ENCODE measurements at regions of chr9 and their contacts with region 1.

Region 1: GRCh38 chr9:121640076-121640475 is 11.4 kb upstream of the DAB2IP start:
- DNase-seq: peak; percentile 50
- ATAC-seq: peak; percentile 96
- H3K4me3 ChIP-seq: peak overlapping the region in 1 of 3 experiments; percentile 44; a peak in 1 of 6 replicates
- H3K27ac ChIP-seq: no peak overlapping the region
- H3K4me1 ChIP-seq: peaks cover 33% of the 10 kb centered on the region
- H3K27me3 ChIP-seq: no peaks in the 10 kb centered on the region
- CTCF ChIP-seq: peak; percentile 94
- EP300 ChIP-seq: no peak
- POLR2A ChIP-seq: no peak
- RAD21 ChIP-seq: peak; percentile 78; the same call in 1 of the 2 replicates

Region 2: GRCh38 chr9:121650217-121651007 is 10.3 kb after region 1 on chr9:
- CTCF ChIA-PET with region 1: no interaction called
- POLR2A ChIA-PET with region 1: interaction called, 13 read pairs
- in situ Hi-C with region 1: no loop called
- intact Hi-C with region 1: no loop called
- DNase-seq: peak; percentile 42
- ATAC-seq: peak; percentile 33
- H3K4me3 ChIP-seq: peak overlapping the region; percentile 65 to 77 (median 67); a peak in 5 of 6 replicates
- H3K27ac ChIP-seq: no peak overlapping the region
- H3K4me1 ChIP-seq: peaks cover 59% of the 10 kb centered on the region
- H3K27me3 ChIP-seq: peaks cover 0 to 11% of the 10 kb centered on the region in 2 experiments; a peak in 2 of 5 replicates
- CTCF ChIP-seq: no peak
- EP300 ChIP-seq: no peak
- POLR2A ChIP-seq: no peak
- RAD21 ChIP-seq: no peak

Region 3: DNA sequence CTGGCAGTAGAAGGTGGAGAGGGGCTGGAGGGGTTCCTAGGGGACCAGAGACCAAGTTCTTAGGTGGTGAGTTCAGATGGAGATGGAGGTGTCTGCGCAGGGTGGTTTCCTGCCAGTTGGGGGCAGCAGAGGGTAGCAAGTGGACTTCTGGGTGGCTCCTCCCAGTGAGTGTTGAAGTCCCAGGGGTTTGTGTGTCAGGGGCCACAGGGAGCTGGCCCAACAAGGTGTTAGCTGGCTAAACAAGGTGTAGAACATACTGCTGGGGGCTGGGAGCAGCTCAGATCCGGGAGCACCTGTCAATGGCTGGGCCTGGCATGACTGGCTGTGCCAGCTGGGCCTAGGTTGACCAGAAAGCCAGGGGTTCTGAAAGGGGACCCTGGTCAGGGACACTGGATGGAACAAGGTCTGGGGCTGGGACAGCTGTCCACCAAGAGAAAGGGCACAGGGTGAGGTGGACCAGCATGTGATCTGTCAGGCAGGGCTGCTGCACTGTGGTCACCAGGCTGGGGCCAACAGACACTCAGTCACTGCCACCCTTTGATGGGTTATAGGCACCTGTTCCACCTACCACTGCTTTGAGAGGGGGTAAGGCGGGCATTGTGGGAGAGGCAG is 47.0 kb after region 1 on chr9:
- CTCF ChIA-PET with region 1: interaction called, 11 read pairs
- POLR2A ChIA-PET with region 1: no interaction called
- in situ Hi-C with region 1: loop called (anchors 5 kb)
- intact Hi-C with region 1: loop called (anchors 1 kb)
- DNase-seq: peak; percentile 63
- ATAC-seq: peak; percentile 87
- H3K4me3 ChIP-seq: no peak overlapping the region
- H3K27ac ChIP-seq: no peak overlapping the region
- H3K4me1 ChIP-seq: peaks cover 36% of the 10 kb centered on the region
- H3K27me3 ChIP-seq: no peaks in the 10 kb centered on the region
- CTCF ChIP-seq: peak; percentile 96
- EP300 ChIP-seq: no peak
- POLR2A ChIP-seq: no peak
- RAD21 ChIP-seq: peak; percentile 75

Region 4: GRCh38 chr9:121698627-121699570 is 58.8 kb after region 1 on chr9:
- CTCF ChIA-PET with region 1: no interaction called
- POLR2A ChIA-PET with region 1: no interaction called
- in situ Hi-C with region 1: no loop called
- intact Hi-C with region 1: loop called (anchors 1 kb)
- DNase-seq: no peak
- ATAC-seq: no peak
- H3K4me3 ChIP-seq: no peak overlapping the region
- H3K27ac ChIP-seq: no peak overlapping the region
- H3K4me1 ChIP-seq: no peaks in the 10 kb centered on the region
- H3K27me3 ChIP-seq: no peaks in the 10 kb centered on the region
- CTCF ChIP-seq: no peak
- EP300 ChIP-seq: no peak
- POLR2A ChIP-seq: no peak
- RAD21 ChIP-seq: no peak

Region 5: GRCh38 chr9:121992571-121993212 is 352.6 kb after region 1 on chr9:
- CTCF ChIA-PET with region 1: interaction called, 4 read pairs
- POLR2A ChIA-PET with region 1: no interaction called
- in situ Hi-C with region 1: loop called (anchors 10 kb)
- intact Hi-C with region 1: loop called (anchors 1 kb)
- DNase-seq: peak; percentile 65
- ATAC-seq: peak; percentile 53
- H3K4me3 ChIP-seq: no peak overlapping the region
- H3K27ac ChIP-seq: no peak overlapping the region
- H3K4me1 ChIP-seq: peaks cover 38% of the 10 kb centered on the region
- H3K27me3 ChIP-seq: no peaks in the 10 kb centered on the region
- CTCF ChIP-seq: peak; percentile 79
- EP300 ChIP-seq: no peak
- POLR2A ChIP-seq: no peak
- RAD21 ChIP-seq: peak; percentile 71

Measured in HepG2 (cell line).